Activated T-helper 1 cell treated with anti-CD3 and anti-CD28 coated beads, Interleukin-12 subunit alpha, Interleukin-12 subunit beta, Interleukin-2, Interleukin-4 antibody, amounts not matched to agents 30 ng/mL and 10 ng/mL and 1 ng/mL, durations not matched to agents 14 hours and 24 hours and 36 hours (primary cell): ENCODE measurements at regions of chr1 and their contacts with region 1.

Region 1: DNA sequence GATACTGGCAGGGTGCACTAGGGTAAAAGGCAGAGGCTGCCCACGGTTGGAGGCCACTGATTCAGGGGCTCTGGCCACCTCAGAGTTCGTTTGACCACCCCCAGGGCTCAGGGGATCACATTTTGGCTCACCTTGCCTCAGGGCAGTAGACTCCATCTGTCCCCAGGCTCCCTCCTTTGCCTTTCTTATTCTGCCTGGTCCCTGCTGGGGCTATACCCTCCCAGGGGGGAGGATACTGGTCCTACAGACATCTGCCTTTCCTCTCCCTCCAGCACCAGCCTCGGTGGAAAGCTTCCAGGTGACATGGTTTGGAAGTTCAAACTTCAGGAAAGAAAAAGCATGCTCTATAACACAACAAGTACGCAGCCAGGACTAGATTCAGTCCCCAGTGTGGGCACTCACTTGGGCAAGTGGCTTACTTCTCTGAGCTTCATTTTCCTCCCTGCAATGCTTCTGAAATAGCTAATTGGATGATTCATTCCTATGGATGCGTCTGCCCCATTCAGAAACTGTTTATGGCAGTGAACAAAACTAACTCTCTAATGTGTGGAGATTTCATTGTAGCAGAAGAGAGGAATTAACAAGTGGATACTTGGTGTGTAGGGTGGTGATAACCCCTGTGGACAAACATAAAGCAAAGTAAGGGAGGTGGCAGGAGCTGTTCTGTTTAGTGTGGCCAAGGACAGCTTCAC is 154.8 kb downstream of the TRABD2B start:
- DNase-seq: no peak
- H3K4me3 Mint-ChIP-seq: no peak overlapping the region
- H3K27ac Mint-ChIP-seq: no peak overlapping the region
- H3K4me1 Mint-ChIP-seq: no peaks in the 10 kb centered on the region
- H3K27me3 Mint-ChIP-seq: peaks cover 5% of the 10 kb centered on the region

Region 2: DNA sequence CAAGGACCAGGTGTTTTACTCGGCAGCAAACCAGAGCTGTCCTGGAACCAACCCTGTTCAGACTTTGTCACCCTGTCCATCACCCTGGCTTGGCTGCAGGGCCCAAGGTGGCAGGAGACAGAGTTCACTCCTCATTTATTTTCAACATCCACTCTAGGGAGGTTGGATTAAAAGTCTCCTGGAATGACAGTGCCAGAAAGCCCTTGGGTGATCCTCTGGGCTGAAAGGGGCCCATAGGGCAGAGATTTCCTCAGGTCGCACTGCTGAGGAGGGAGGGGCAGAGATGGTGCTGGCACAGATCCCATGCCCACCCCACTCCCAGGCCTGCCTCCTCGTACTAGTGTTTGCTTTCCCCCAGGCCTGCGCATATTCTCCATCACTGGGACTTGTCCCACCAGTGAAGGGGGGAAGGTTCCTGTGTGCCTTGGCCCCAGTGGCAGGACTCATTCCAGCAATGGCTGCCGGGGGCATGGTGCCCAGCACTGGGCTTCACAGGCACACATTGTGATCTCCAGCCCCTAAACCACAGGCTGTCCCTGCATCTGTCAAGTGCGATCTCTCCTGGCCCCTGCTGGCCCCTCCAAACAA is 53.3 kb after region 1 on chr1:
- intact Hi-C with region 1: loop called (anchors 2 kb)
- DNase-seq: no peak
- H3K4me3 Mint-ChIP-seq: no peak overlapping the region
- H3K27ac Mint-ChIP-seq: no peak overlapping the region
- H3K4me1 Mint-ChIP-seq: no peaks in the 10 kb centered on the region
- H3K27me3 Mint-ChIP-seq: no peaks in the 10 kb centered on the region

Region 3: GRCh38 chr1:48291185-48291820 is 448.9 kb after region 1 on chr1:
- intact Hi-C with region 1: no loop called
- DNase-seq: no peak
- H3K4me3 Mint-ChIP-seq: no peak overlapping the region
- H3K27ac Mint-ChIP-seq: no peak overlapping the region
- H3K4me1 Mint-ChIP-seq: no peaks in the 10 kb centered on the region
- H3K27me3 Mint-ChIP-seq: no peaks in the 10 kb centered on the region

Region 4: GRCh38 chr1:48530727-48531351 is 688.5 kb after region 1 on chr1:
- intact Hi-C with region 1: no loop called
- DNase-seq: peak; percentile 12
- H3K4me3 Mint-ChIP-seq: no peak overlapping the region
- H3K27ac Mint-ChIP-seq: no peak overlapping the region
- H3K4me1 Mint-ChIP-seq: no peaks in the 10 kb centered on the region
- H3K27me3 Mint-ChIP-seq: peaks cover 4% of the 10 kb centered on the region